ENCODE measurements at regions of chr1 and their contacts with region 1.

Region 1: GRCh38 chr1:85692730-85693314 is 15.4 kb downstream of the ZNHIT6 start:
- DNase-seq: peak; percentile 33
- H3K4me3 ChIP-seq: no peak overlapping the region
- H3K27ac ChIP-seq: no peak overlapping the region
- H3K27me3 ChIP-seq: no peaks in the 10 kb centered on the region
- CTCF ChIP-seq: peak; percentile 56

Region 2: GRCh38 chr1:85344256-85344694 is 348.5 kb before region 1 on chr1:
- CTCF ChIA-PET with region 1: interaction called, 10 read pairs
- POLR2A ChIA-PET with region 1: no interaction called
- DNase-seq: no peak
- H3K4me3 ChIP-seq: no peak overlapping the region
- H3K27ac ChIP-seq: peak overlapping the region; percentile 69
- H3K27me3 ChIP-seq: no peaks in the 10 kb centered on the region
- CTCF ChIP-seq: peak; percentile 68

Region 3: GRCh38 chr1:85580872-85581801 is 111.7 kb before region 1 on chr1:
- CTCF ChIA-PET with region 1: interaction called, 84 read pairs
- POLR2A ChIA-PET with region 1: interaction called, 40 read pairs
- DNase-seq: peak; percentile 52
- H3K4me3 ChIP-seq: peak overlapping the region; percentile 93
- H3K27ac ChIP-seq: peak overlapping the region; percentile 99
- H3K27me3 ChIP-seq: no peaks in the 10 kb centered on the region
- CTCF ChIP-seq: peak; percentile 60

Region 4: GRCh38 chr1:85607126-85607912 is 85.5 kb before region 1 on chr1:
- CTCF ChIA-PET with region 1: interaction called, 27 read pairs
- POLR2A ChIA-PET with region 1: interaction called, 9 read pairs
- DNase-seq: peak; percentile 99
- H3K4me3 ChIP-seq: no peak overlapping the region
- H3K27ac ChIP-seq: peak overlapping the region; percentile 99
- H3K27me3 ChIP-seq: no peaks in the 10 kb centered on the region
- CTCF ChIP-seq: no peak

Region 5: DNA sequence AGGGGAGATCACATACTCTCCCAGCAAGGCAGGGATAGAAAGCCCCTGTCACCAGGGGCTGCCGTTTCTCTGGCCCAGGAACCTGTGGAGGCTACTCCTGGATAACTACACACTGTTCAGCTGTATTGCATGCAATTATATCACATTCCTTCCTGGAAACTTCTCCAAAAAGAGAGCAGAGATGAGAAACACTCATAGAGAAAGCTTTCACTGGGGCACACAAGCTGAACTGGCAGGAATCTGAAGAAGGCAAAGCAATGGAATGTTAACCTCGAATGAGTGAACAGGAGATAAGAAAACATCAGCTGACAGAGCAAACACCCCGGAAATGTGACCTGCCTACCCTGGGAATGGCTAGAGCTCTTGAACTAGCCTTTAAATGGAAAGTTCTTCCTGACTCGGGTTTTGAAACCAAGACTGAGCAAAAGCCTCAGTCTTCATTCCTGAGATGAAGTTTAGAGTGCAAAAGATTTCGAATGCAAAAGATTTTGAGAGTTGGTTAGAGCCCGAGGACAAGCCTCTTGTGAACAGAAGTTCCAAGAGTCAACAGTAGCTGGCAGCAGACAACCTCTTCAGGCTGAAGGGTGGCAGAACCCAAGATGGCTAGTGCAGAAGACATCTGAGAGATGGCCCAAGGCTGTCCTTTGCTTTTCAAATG is 80.0 kb before region 1 on chr1:
- CTCF ChIA-PET with region 1: interaction called, 27 read pairs
- POLR2A ChIA-PET with region 1: interaction called, 9 read pairs
- DNase-seq: peak; percentile 85
- H3K4me3 ChIP-seq: no peak overlapping the region
- H3K27ac ChIP-seq: peak overlapping the region; percentile 99
- H3K27me3 ChIP-seq: no peaks in the 10 kb centered on the region
- CTCF ChIP-seq: peak; percentile 67

Region 6: GRCh38 chr1:85628791-85629531 is 63.9 kb before region 1 on chr1:
- CTCF ChIA-PET with region 1: interaction called, 18 read pairs
- POLR2A ChIA-PET with region 1: interaction called, 10 read pairs
- DNase-seq: peak; percentile 92
- H3K4me3 ChIP-seq: peak overlapping the region; percentile 40
- H3K27ac ChIP-seq: peak overlapping the region; percentile 94
- H3K27me3 ChIP-seq: no peaks in the 10 kb centered on the region
- CTCF ChIP-seq: no peak

Region 7: GRCh38 chr1:85707990-85708828 is 15.4 kb after region 1 on chr1 and contains the start of gene ZNHIT6:
- CTCF ChIA-PET with region 1: interaction called, 15 read pairs
- POLR2A ChIA-PET with region 1: interaction called, 6 read pairs
- DNase-seq: peak; percentile 89
- H3K4me3 ChIP-seq: peak within 1 kb of the TSS; percentile 93
- H3K27ac ChIP-seq: peak within 1 kb of the TSS; percentile 84
- H3K27me3 ChIP-seq: no peaks in the 10 kb centered on the region
- CTCF ChIP-seq: peak; percentile 56
- polyA plus RNA-seq, gene ZNHIT6: 18.9 and 19.2 TPM in 2 replicates

Region 8: DNA sequence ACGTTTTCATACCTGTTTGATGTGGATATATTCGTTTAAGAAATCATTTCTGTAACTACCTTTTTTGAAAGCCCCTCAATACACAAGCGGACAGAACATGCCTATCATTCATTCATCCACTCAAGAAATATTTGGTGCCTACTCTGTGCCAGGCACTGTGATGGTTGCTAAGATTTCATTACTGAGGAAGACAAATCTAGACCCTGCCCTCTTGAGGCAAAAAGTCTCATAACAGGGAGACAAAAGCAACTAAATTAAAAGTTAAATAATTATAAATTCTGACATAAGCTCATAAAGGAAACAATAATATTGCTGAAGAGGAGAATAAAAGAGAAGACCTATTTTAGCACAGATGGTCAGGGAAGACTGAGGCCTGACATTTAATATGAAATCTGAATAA is 218.9 kb after region 1 on chr1:
- CTCF ChIA-PET with region 1: no interaction called
- POLR2A ChIA-PET with region 1: no interaction called
- DNase-seq: no peak
- H3K4me3 ChIP-seq: no peak overlapping the region
- H3K27ac ChIP-seq: no peak overlapping the region
- H3K27me3 ChIP-seq: no peaks in the 10 kb centered on the region
- CTCF ChIP-seq: peak; percentile 44

Region 9: DNA sequence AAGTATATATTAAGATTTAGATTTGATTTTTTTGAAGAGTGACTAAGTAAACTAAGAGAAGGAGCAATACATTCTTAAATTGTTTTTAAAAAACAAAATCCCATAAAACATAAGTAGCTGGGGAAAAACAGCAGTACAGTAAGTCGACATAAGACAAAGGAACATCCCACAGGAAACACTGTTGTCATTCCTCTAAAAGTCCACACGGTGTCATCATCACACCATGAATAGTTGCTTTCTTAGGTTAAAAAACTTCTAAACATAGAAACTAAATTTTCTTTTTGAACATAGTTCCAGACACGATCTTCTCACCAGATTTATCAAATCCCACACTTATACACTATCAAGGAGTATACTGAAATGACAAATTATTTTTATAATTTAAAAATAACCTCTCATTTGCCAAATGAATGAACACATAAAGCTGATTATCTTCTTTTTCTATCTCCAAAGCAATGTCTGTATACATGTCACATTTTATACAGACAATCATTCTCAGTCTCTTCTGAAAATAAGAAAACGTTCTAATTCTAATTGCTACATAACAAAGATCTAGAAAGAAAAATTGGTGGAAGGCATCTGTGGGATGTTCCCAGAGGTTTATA is 687.5 kb after region 1 on chr1:
- CTCF ChIA-PET with region 1: no interaction called
- POLR2A ChIA-PET with region 1: no interaction called
- DNase-seq: peak; percentile 60
- H3K4me3 ChIP-seq: no peak overlapping the region
- H3K27ac ChIP-seq: no peak overlapping the region
- H3K27me3 ChIP-seq: no peaks in the 10 kb centered on the region
- CTCF ChIP-seq: peak; percentile 74

Measured in AG04450 (cell line).